ENCODE measurements at regions of chr16 and their contacts with region 1.

Region 1: GRCh38 chr16:85554112-85554813 is 58.9 kb upstream of the GSE1 start:
- DNase-seq: peak; percentile 85
- ATAC-seq: peak; percentile 76
- H3K4me3 ChIP-seq: peak overlapping the region; percentile 95
- H3K27ac ChIP-seq: peak overlapping the region; percentile 97
- H3K4me1 ChIP-seq: peaks cover 13% of the 10 kb centered on the region
- H3K27me3 ChIP-seq: no peaks in the 10 kb centered on the region
- CTCF ChIP-seq: no peak
- EP300 ChIP-seq: peak; percentile 65 to 78; a peak in 3 of 4 replicates
- POLR2A ChIP-seq: peak; percentile 72
- RAD21 ChIP-seq: no peak

Region 2: GRCh38 chr16:85448557-85449197 is 105.6 kb before region 1 on chr16:
- CTCF ChIA-PET with region 1: interaction called, 3 read pairs
- POLR2A ChIA-PET with region 1: interaction called, 3 read pairs
- RAD21 ChIA-PET with region 1: interaction called, 8 read pairs
- SMC1A ChIA-PET with region 1: interaction called, 6 read pairs
- in situ Hi-C with region 1: no loop called
- intact Hi-C with region 1: loop called (anchors 10 kb)
- DNase-seq: no peak
- ATAC-seq: peak; percentile 49
- H3K4me3 ChIP-seq: no peak overlapping the region
- H3K27ac ChIP-seq: no peak overlapping the region
- H3K4me1 ChIP-seq: peaks cover 26% of the 10 kb centered on the region
- H3K27me3 ChIP-seq: no peaks in the 10 kb centered on the region; a peak in 1 of 4 replicates
- CTCF ChIP-seq: no peak
- EP300 ChIP-seq: no peak
- POLR2A ChIP-seq: no peak
- RAD21 ChIP-seq: no peak

Region 3: GRCh38 chr16:85536411-85537330 is 17.6 kb before region 1 on chr16:
- CTCF ChIA-PET with region 1: no interaction called
- POLR2A ChIA-PET with region 1: no interaction called
- RAD21 ChIA-PET with region 1: no interaction called
- SMC1A ChIA-PET with region 1: no interaction called
- in situ Hi-C with region 1: no loop called
- intact Hi-C with region 1: no loop called
- DNase-seq: no peak
- ATAC-seq: no peak
- H3K4me3 ChIP-seq: no peak overlapping the region
- H3K27ac ChIP-seq: no peak overlapping the region
- H3K4me1 ChIP-seq: no peaks in the 10 kb centered on the region
- H3K27me3 ChIP-seq: no peaks in the 10 kb centered on the region; a peak in 1 of 4 replicates
- CTCF ChIP-seq: no peak
- EP300 ChIP-seq: no peak
- POLR2A ChIP-seq: no peak
- RAD21 ChIP-seq: no peak

Region 4: GRCh38 chr16:85564277-85565051 is 10.2 kb after region 1 on chr16:
- CTCF ChIA-PET with region 1: interaction called, 47 read pairs
- POLR2A ChIA-PET with region 1: interaction called, 53 read pairs
- RAD21 ChIA-PET with region 1: interaction called, 85 read pairs
- SMC1A ChIA-PET with region 1: interaction called, 73 read pairs
- in situ Hi-C with region 1: no loop called
- intact Hi-C with region 1: no loop called
- DNase-seq: no peak
- ATAC-seq: peak; percentile 71
- H3K4me3 ChIP-seq: no peak overlapping the region; the same call in 1 of the 2 replicates
- H3K27ac ChIP-seq: no peak overlapping the region
- H3K4me1 ChIP-seq: peaks cover 27% of the 10 kb centered on the region
- H3K27me3 ChIP-seq: no peaks in the 10 kb centered on the region
- CTCF ChIP-seq: peak; percentile 62 to 76 (median 66)
- EP300 ChIP-seq: no peak
- POLR2A ChIP-seq: no peak
- RAD21 ChIP-seq: no peak

Region 5: DNA sequence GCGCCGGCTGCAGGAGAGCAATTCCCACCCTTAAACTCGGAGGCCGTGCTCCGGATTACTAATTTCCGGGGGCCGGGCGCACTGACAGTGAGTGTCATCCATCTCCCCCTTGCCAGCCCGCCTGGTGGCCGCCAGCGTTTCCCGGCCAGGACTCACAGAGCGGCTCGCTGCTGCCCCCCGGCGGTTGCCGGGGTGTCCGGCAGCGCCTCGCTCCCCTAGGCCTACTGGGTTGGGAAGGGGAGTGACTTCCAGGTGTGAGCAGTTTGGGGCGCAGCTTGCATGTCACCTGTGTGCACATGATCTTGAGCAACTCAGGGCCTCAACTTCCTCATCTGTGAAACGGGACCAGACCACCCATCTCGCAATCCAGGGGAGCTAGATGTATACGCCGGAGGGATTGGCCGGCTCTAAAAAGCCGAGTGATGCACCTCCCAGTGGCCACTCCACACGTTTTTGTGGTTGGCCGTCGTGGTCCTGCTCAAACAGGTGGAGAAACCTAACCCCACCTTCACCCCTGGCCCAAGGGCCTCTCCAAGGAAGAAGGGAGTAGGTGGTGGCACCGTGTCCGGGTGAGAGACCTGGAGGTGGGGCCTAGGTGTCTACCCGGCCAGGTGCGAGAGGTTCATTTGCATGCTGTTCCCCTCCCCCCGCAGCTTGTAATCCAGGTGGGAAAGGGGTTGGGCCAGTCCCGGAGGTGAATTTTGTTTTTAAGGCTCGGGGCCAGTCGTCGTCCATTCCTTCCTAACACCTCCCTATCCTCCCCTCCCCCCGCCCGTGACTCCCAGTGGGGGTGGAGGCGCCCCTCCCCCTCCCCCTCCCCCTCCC is 56.5 kb after region 1 on chr16:
- CTCF ChIA-PET with region 1: interaction called, 52 read pairs
- POLR2A ChIA-PET with region 1: interaction called, 32 read pairs
- RAD21 ChIA-PET with region 1: interaction called, 56 read pairs
- SMC1A ChIA-PET with region 1: interaction called, 21 read pairs
- in situ Hi-C with region 1: no loop called
- intact Hi-C with region 1: loop called (anchors 1 kb)
- DNase-seq: no peak
- ATAC-seq: peak; percentile 70
- H3K4me3 ChIP-seq: peak overlapping the region; percentile 70; the same call in 1 of the 2 replicates
- H3K27ac ChIP-seq: no peak overlapping the region
- H3K4me1 ChIP-seq: peaks cover 35% of the 10 kb centered on the region
- H3K27me3 ChIP-seq: no peaks in the 10 kb centered on the region
- CTCF ChIP-seq: peak; percentile 96 to 99 (median 97)
- EP300 ChIP-seq: no peak
- POLR2A ChIP-seq: no peak
- RAD21 ChIP-seq: peak; percentile 93

Region 6: GRCh38 chr16:85688586-85689284 is 134.5 kb after region 1 on chr16 and contains the start of gene GINS2:
- CTCF ChIA-PET with region 1: no interaction called
- POLR2A ChIA-PET with region 1: no interaction called
- RAD21 ChIA-PET with region 1: interaction called, 4 read pairs
- SMC1A ChIA-PET with region 1: interaction called, 3 read pairs
- in situ Hi-C with region 1: no loop called
- intact Hi-C with region 1: loop called (anchors 2 kb)
- DNase-seq: peak; percentile 44
- ATAC-seq: peak; percentile 96
- H3K4me3 ChIP-seq: peak within 1 kb of the TSS; percentile 81
- H3K27ac ChIP-seq: peak within 1 kb of the TSS; percentile 69
- H3K4me1 ChIP-seq: peaks cover 23% of the 10 kb centered on the region
- H3K27me3 ChIP-seq: no peaks in the 10 kb centered on the region
- CTCF ChIP-seq: no peak
- EP300 ChIP-seq: no peak
- POLR2A ChIP-seq: peak; percentile 84
- RAD21 ChIP-seq: no peak
- polyA plus RNA-seq, gene GINS2: 69.4 to 90.8 TPM

Region 7: DNA sequence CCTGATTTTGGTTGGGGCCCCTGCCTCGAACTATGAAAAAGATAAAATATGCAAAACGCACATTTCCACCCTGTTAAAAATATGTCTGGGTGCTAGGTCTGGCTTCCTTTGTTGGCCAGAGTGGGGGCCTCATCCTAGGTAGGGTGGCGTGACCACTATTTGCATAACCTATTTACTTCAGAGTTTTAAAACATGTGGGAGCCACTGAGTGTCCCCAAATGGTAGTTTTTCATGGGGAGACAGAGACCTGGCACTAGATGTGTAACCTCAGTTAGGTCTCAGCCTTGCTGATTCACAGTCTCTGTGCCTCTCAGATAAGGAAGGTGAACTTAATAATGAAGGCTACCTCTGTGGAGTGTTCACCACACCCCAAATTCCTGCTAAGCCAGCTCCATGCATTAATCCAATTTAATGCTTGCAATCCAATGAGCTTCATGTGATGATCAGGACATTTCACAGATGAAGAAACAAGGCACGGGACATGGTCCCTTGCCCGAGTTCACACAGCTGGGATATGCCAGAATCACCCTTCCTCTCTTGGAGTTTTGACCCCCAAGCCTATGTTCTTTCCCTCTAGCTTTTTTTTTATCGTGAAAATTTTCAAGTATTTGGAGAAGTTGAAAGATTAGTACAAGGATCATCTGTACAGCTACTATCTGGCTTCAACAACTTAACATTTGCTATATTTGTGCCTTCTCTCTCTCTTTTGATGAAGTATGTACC is 448.1 kb after region 1 on chr16:
- CTCF ChIA-PET with region 1: no interaction called
- POLR2A ChIA-PET with region 1: no interaction called
- RAD21 ChIA-PET with region 1: no interaction called
- SMC1A ChIA-PET with region 1: no interaction called
- in situ Hi-C with region 1: loop called (anchors 10 kb)
- intact Hi-C with region 1: no loop called
- DNase-seq: peak; percentile 76
- ATAC-seq: peak; percentile 85
- H3K4me3 ChIP-seq: no peak overlapping the region
- H3K27ac ChIP-seq: peak overlapping the region; percentile 81
- H3K4me1 ChIP-seq: peaks cover 49% of the 10 kb centered on the region
- H3K27me3 ChIP-seq: no peaks in the 10 kb centered on the region
- CTCF ChIP-seq: no peak
- EP300 ChIP-seq: no peak
- POLR2A ChIP-seq: peak; percentile 59
- RAD21 ChIP-seq: 0 out of 2 replicates have a peak, but pooled peaks have one; percentile 2

Measured in GM12878 (cell line).